Naive thymus-derived CD4-positive, alpha-beta T cell (primary cell): ENCODE measurements at regions of chr15 and their contacts with region 1.

Region 1: DNA sequence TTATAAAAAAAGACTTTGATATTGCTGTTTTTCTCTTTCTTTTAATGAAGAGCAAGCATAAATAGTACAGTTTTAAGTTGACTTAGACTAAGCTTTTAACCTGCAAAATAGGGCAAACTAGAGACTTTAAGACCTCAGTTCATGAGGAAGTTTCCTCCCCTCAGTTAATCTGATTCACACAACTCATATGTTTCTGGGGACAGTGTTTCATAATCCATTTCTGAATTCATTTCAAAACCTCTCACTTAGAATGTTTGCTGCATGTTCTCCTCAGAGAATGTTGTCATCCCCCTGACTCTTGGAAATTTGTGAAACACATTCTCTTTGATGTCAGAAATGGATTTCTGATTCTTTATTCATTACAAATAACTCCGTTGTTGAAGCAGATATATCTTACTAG is 79.3 kb upstream of the SKOR1 start:
- DNase-seq: no peak
- ATAC-seq: peak; percentile 31
- H3K4me3 ChIP-seq: peak overlapping the region; percentile 12
- H3K4me3 Mint-ChIP-seq: peak overlapping the region; percentile 3 to 79 (median 69)
- H3K27ac ChIP-seq: peak overlapping the region; percentile 21
- H3K27ac Mint-ChIP-seq: peak overlapping the region; percentile 31 to 89 (median 81)
- H3K4me1 ChIP-seq: peaks cover 3 to 55% of the 10 kb centered on the region in 2 donors
- H3K4me1 Mint-ChIP-seq: peaks cover 39 to 91% (median 69%) of the 10 kb centered on the region in 7 donors
- H3K27me3 ChIP-seq: no peaks in the 10 kb centered on the region
- H3K27me3 Mint-ChIP-seq: no peaks in the 10 kb centered on the region

Region 2: DNA sequence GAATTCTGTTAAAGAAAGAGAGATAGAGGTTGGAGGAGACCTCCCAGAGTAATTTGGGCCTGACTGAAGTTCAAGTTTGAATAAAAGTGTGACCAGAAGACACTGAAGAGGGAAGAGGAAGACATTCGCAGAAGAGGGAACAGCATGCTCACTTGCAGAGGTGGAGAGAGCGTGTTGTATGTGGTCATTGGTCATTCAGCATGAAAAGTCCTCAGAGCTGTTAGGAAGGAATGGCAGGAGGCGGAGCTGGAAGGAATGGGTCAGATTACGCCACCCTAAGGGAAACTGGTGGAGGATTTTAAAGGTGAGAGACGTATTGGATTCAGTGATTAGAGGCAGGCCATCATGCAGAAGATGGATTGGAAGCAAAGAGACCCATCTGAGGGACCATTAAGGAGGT is 449.8 kb before region 1 on chr15:
- CTCF ChIA-PET with region 1: no interaction called
- POLR2A ChIA-PET with region 1: no interaction called
- intact Hi-C with region 1: no loop called
- DNase-seq: no peak
- ATAC-seq: no peak
- H3K4me3 ChIP-seq: no peak overlapping the region
- H3K4me3 Mint-ChIP-seq: no peak overlapping the region
- H3K27ac ChIP-seq: no peak overlapping the region
- H3K27ac Mint-ChIP-seq: no peak overlapping the region
- H3K4me1 ChIP-seq: no peaks in the 10 kb centered on the region
- H3K4me1 Mint-ChIP-seq: no peaks in the 10 kb centered on the region
- H3K27me3 ChIP-seq: no peaks in the 10 kb centered on the region
- H3K27me3 Mint-ChIP-seq: peaks cover 0 to 7% (median 3%) of the 10 kb centered on the region in 5 donors

Region 3: GRCh38 chr15:67601073-67601472 is 144.9 kb before region 1 on chr15:
- CTCF ChIA-PET with region 1: no interaction called
- POLR2A ChIA-PET with region 1: no interaction called
- intact Hi-C with region 1: no loop called
- DNase-seq: no peak
- ATAC-seq: no peak
- H3K4me3 ChIP-seq: no peak overlapping the region
- H3K4me3 Mint-ChIP-seq: no peak overlapping the region
- H3K27ac ChIP-seq: no peak overlapping the region
- H3K27ac Mint-ChIP-seq: no peak overlapping the region
- H3K4me1 ChIP-seq: no peaks in the 10 kb centered on the region
- H3K4me1 Mint-ChIP-seq: peaks cover 0 to 2% (median 0%) of the 10 kb centered on the region in 7 donors
- H3K27me3 ChIP-seq: no peaks in the 10 kb centered on the region
- H3K27me3 Mint-ChIP-seq: no peaks in the 10 kb centered on the region

Region 4: DNA sequence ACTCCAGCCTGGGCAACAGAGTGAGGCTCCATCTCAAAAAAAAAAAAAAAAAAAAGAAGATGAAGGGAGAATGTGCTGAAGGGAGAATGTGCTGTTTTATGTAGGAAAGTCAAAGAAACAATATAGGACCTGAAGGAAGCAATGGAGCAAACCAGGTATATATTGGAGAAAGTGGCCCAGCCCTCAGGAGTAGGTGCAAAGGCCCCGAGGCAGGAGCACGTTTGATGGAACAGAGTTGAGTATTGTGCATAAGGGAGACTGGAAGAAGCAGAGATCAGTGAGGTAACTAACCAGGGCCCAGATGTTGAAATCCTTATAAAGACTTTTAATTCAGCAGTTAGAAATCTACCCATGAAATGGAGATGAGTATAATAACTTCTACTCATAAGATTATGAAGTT is 123.9 kb before region 1 on chr15:
- CTCF ChIA-PET with region 1: no interaction called
- POLR2A ChIA-PET with region 1: no interaction called
- intact Hi-C with region 1: loop called in 1 of 2 experiments (anchors 10 kb)
- DNase-seq: no peak
- ATAC-seq: no peak
- H3K4me3 ChIP-seq: no peak overlapping the region
- H3K4me3 Mint-ChIP-seq: no peak overlapping the region
- H3K27ac ChIP-seq: no peak overlapping the region
- H3K27ac Mint-ChIP-seq: peak overlapping the region in 1 of 9 donors; percentile 34
- H3K4me1 ChIP-seq: no peaks in the 10 kb centered on the region
- H3K4me1 Mint-ChIP-seq: no peaks in the 10 kb centered on the region
- H3K27me3 ChIP-seq: no peaks in the 10 kb centered on the region
- H3K27me3 Mint-ChIP-seq: no peaks in the 10 kb centered on the region

Region 5: GRCh38 chr15:67731112-67731761 is 14.8 kb before region 1 on chr15:
- CTCF ChIA-PET with region 1: no interaction called
- POLR2A ChIA-PET with region 1: no interaction called
- intact Hi-C with region 1: no loop called
- DNase-seq: no peak
- ATAC-seq: no peak
- H3K4me3 ChIP-seq: no peak overlapping the region
- H3K4me3 Mint-ChIP-seq: peak overlapping the region in 2 of 10 donors; percentile 29 to 56
- H3K27ac ChIP-seq: no peak overlapping the region
- H3K27ac Mint-ChIP-seq: peak overlapping the region in 2 of 9 donors; percentile 6 to 19
- H3K4me1 ChIP-seq: peaks cover 0 to 8% of the 10 kb centered on the region in 2 donors
- H3K4me1 Mint-ChIP-seq: peaks cover 14 to 41% (median 20%) of the 10 kb centered on the region in 7 donors
- H3K27me3 ChIP-seq: no peaks in the 10 kb centered on the region
- H3K27me3 Mint-ChIP-seq: no peaks in the 10 kb centered on the region